ENCODE measurements at regions of chr5 and their contacts with region 1.

Region 1: GRCh38 chr5:112860929-112861637 is at the start of gene SRP19:
- DNase-seq: peak; percentile 78 to 93 (median 90)
- ATAC-seq: peak; percentile 96
- H3K4me3 ChIP-seq: peak within 1 kb of the TSS; percentile 88
- H3K4me3 Mint-ChIP-seq: peak within 1 kb of the TSS; percentile 91 to 97 (median 96)
- H3K27ac ChIP-seq: peak within 1 kb of the TSS; percentile 89
- H3K27ac Mint-ChIP-seq: peak within 1 kb of the TSS; percentile 95 to 99 (median 97)
- H3K4me1 ChIP-seq: peaks cover 19% of the 10 kb centered on the region in 2 donors
- H3K4me1 Mint-ChIP-seq: peaks cover 5 to 41% (median 32%) of the 10 kb centered on the region in 7 donors
- H3K27me3 ChIP-seq: no peaks in the 10 kb centered on the region
- H3K27me3 Mint-ChIP-seq: peaks cover 5 to 18% (median 6%) of the 10 kb centered on the region in 5 donors
- total RNA-seq, gene SRP19: 34.2 to 70.9 (median 41.5) TPM

Region 2: GRCh38 chr5:112848116-112848811 is 12.8 kb before region 1 on chr5:
- CTCF ChIA-PET with region 1: interaction called, 4 read pairs
- POLR2A ChIA-PET with region 1: interaction called, 3 read pairs
- intact Hi-C with region 1: loop called in 1 of 2 experiments (anchors 1 kb)
- DNase-seq: peak in 7 of 9 donors; percentile 8 to 51 (median 40)
- ATAC-seq: peak; percentile 97
- H3K4me3 ChIP-seq: no peak overlapping the region
- H3K4me3 Mint-ChIP-seq: peak overlapping the region in 2 of 10 donors; percentile 16 to 41
- H3K27ac ChIP-seq: no peak overlapping the region
- H3K27ac Mint-ChIP-seq: peak overlapping the region in 3 of 9 donors; percentile 53 to 58 (median 53)
- H3K4me1 ChIP-seq: no peaks in the 10 kb centered on the region
- H3K4me1 Mint-ChIP-seq: peaks cover 4 to 8% (median 6%) of the 10 kb centered on the region in 7 donors
- H3K27me3 ChIP-seq: no peaks in the 10 kb centered on the region
- H3K27me3 Mint-ChIP-seq: peaks cover 0 to 20% (median 5%) of the 10 kb centered on the region in 5 donors

Region 3: DNA sequence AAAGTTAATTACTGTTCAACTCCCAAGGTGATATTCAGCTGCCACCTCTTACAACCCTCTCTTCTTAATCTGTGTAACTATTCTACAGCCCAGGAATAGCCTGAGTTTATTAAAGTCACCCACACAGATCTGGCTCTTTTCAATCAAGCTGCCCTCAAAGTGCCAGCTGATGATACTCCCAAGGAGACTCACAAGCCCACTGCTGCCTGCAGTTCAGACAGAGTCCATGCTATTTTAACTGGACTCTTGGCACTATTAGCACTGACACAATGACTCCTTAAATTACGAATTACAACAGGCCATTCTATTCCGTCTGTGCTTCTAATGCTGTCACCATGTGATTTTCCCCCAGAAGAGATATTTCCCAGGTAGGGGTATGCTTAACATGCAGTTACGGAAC is 34.6 kb after region 1 on chr5:
- CTCF ChIA-PET with region 1: no interaction called
- POLR2A ChIA-PET with region 1: no interaction called
- intact Hi-C with region 1: no loop called
- DNase-seq: no peak
- ATAC-seq: no peak
- H3K4me3 ChIP-seq: no peak overlapping the region
- H3K4me3 Mint-ChIP-seq: no peak overlapping the region
- H3K27ac ChIP-seq: no peak overlapping the region
- H3K27ac Mint-ChIP-seq: peak overlapping the region in 1 of 9 donors; percentile 28
- H3K4me1 ChIP-seq: no peaks in the 10 kb centered on the region
- H3K4me1 Mint-ChIP-seq: peaks cover 7 to 18% (median 15%) of the 10 kb centered on the region in 7 donors
- H3K27me3 ChIP-seq: no peaks in the 10 kb centered on the region
- H3K27me3 Mint-ChIP-seq: no peaks in the 10 kb centered on the region

Region 4: GRCh38 chr5:112968411-112969106 is 107.5 kb after region 1 on chr5:
- CTCF ChIA-PET with region 1: no interaction called
- POLR2A ChIA-PET with region 1: interaction called, 4 read pairs
- intact Hi-C with region 1: loop called (anchors 1 kb)
- DNase-seq: no peak
- ATAC-seq: no peak
- H3K4me3 ChIP-seq: no peak overlapping the region
- H3K4me3 Mint-ChIP-seq: no peak overlapping the region
- H3K27ac ChIP-seq: no peak overlapping the region
- H3K27ac Mint-ChIP-seq: no peak overlapping the region
- H3K4me1 ChIP-seq: no peaks in the 10 kb centered on the region
- H3K4me1 Mint-ChIP-seq: peaks cover 0 to 21% (median 7%) of the 10 kb centered on the region in 7 donors
- H3K27me3 ChIP-seq: no peaks in the 10 kb centered on the region
- H3K27me3 Mint-ChIP-seq: no peaks in the 10 kb centered on the region

Region 5: GRCh38 chr5:113022661-113023060 is 161.6 kb after region 1 on chr5:
- CTCF ChIA-PET with region 1: no interaction called
- POLR2A ChIA-PET with region 1: interaction called, 4 read pairs
- intact Hi-C with region 1: loop called in 1 of 2 experiments (anchors 5 kb)
- DNase-seq: peak in 7 of 9 donors; percentile 56 to 86 (median 77)
- ATAC-seq: peak; percentile 95
- H3K4me3 ChIP-seq: peak overlapping the region; percentile 1
- H3K4me3 Mint-ChIP-seq: peak overlapping the region; percentile 5 to 78 (median 70)
- H3K27ac ChIP-seq: peak overlapping the region; percentile 12
- H3K27ac Mint-ChIP-seq: peak overlapping the region; percentile 74 to 94 (median 87)
- H3K4me1 ChIP-seq: peaks cover 36 to 47% of the 10 kb centered on the region in 2 donors
- H3K4me1 Mint-ChIP-seq: peaks cover 24 to 79% (median 68%) of the 10 kb centered on the region in 7 donors
- H3K27me3 ChIP-seq: no peaks in the 10 kb centered on the region
- H3K27me3 Mint-ChIP-seq: no peaks in the 10 kb centered on the region

Region 6: DNA sequence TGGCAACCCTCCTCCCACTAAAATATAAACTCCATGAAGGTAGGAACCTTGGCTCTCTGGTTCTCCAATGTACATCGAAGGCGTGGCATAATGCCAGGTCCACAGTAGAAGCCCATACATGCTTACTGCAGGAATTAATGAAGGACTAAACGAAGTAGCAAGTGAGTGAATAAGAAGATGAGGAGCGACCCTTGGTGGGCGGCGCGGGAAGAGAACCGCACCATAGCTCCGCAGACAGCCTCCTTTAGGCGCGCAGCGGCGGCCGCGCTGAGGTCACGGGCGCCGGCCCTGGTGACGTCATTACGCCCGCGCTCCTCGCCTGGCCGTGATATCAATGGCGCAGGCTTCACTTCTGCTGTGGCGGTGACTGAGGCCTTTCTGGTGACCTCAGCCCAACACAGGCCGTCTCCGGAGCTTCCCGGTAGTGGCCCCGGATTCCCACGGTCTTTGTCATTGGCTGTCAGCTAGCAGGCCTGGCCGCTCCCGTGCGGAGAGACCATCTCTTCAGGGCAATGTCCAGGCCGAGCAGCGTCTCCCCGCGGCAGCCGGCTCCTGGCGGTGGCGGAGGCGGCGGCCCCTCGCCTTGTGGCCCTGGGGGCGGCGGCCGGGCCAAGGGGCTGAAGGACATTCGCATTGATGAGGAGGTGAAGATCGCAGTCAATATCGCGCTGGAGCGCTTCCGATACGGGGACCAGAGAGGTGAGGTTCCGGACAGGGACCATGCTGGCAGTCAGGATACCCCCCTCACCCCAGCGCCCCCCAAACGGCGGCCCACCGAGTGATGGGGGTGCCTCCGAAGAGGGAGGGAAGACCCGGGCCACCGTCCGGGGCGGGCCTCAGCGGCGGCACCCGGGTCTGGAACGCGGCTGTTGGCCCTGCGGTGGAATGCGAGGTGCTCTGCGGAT is 652.6 kb after region 1 on chr5 and contains the start of gene YTHDC2:
- CTCF ChIA-PET with region 1: no interaction called
- POLR2A ChIA-PET with region 1: no interaction called
- intact Hi-C with region 1: loop called in 1 of 2 experiments (anchors 1 kb)
- DNase-seq: peak; percentile 79 to 89 (median 87)
- ATAC-seq: peak; percentile 97
- H3K4me3 ChIP-seq: peak within 1 kb of the TSS; percentile 85
- H3K4me3 Mint-ChIP-seq: peak within 1 kb of the TSS; percentile 86 to 98 (median 94)
- H3K27ac ChIP-seq: peak within 1 kb of the TSS; percentile 94
- H3K27ac Mint-ChIP-seq: peak within 1 kb of the TSS; percentile 86 to 98 (median 97)
- H3K4me1 ChIP-seq: peaks cover 6 to 9% of the 10 kb centered on the region in 2 donors
- H3K4me1 Mint-ChIP-seq: peaks cover 27 to 51% (median 44%) of the 10 kb centered on the region in 7 donors
- H3K27me3 ChIP-seq: no peaks in the 10 kb centered on the region
- H3K27me3 Mint-ChIP-seq: peaks cover 12 to 19% (median 13%) of the 10 kb centered on the region in 5 donors
- total RNA-seq, gene YTHDC2: 27.7 to 53.6 (median 49.2) TPM

Measured in naive thymus-derived CD4-positive, alpha-beta T cell (primary cell).